WTC11 (cell line): ENCODE measurements at regions of chr17 and their contacts with region 1.

Region 1: GRCh38 chr17:5031365-5032082 is 3.7 kb downstream of the SLC52A1 start:
- DNase-seq: peak; percentile 85
- ATAC-seq: peak; percentile 62
- H3K4me3 Mint-ChIP-seq: peak overlapping the region; percentile 66
- H3K27ac Mint-ChIP-seq: no peak overlapping the region
- H3K4me1 Mint-ChIP-seq: no peaks in the 10 kb centered on the region
- H3K27me3 Mint-ChIP-seq: peaks cover 26% of the 10 kb centered on the region
- CTCF ChIP-seq: peak; percentile 84

Region 2: GRCh38 chr17:4986951-4987766 is 44.4 kb before region 1 on chr17 and contains the start of gene CAMTA2:
- CTCF ChIA-PET with region 1: interaction called, 16 read pairs
- POLR2A ChIA-PET with region 1: no interaction called
- DNase-seq: peak; percentile 88
- ATAC-seq: peak; percentile 77
- H3K4me3 Mint-ChIP-seq: peak within 1 kb of the TSS; percentile 77
- H3K27ac Mint-ChIP-seq: no peak within 1 kb of the TSS
- H3K4me1 Mint-ChIP-seq: peaks cover 25% of the 10 kb centered on the region
- H3K27me3 Mint-ChIP-seq: peaks cover 44% of the 10 kb centered on the region
- CTCF ChIP-seq: peak; percentile 37
- total RNA-seq, gene CAMTA2: 9.2 to 14.2 TPM (median 12.3 TPM) in 3 replicates

Region 3: GRCh38 chr17:5055543-5055942 is 24.0 kb after region 1 on chr17:
- CTCF ChIA-PET with region 1: interaction called, 23 read pairs
- POLR2A ChIA-PET with region 1: no interaction called
- DNase-seq: no peak
- ATAC-seq: peak; percentile 81
- H3K4me3 Mint-ChIP-seq: no peak overlapping the region
- H3K27ac Mint-ChIP-seq: no peak overlapping the region
- H3K4me1 Mint-ChIP-seq: no peaks in the 10 kb centered on the region
- H3K27me3 Mint-ChIP-seq: peaks cover 12% of the 10 kb centered on the region
- CTCF ChIP-seq: no peak

Region 4: GRCh38 chr17:5065227-5065744 is 33.8 kb after region 1 on chr17:
- CTCF ChIA-PET with region 1: interaction called, 23 read pairs
- POLR2A ChIA-PET with region 1: interaction called, 5 read pairs
- DNase-seq: no peak
- ATAC-seq: no peak
- H3K4me3 Mint-ChIP-seq: no peak overlapping the region
- H3K27ac Mint-ChIP-seq: no peak overlapping the region
- H3K4me1 Mint-ChIP-seq: no peaks in the 10 kb centered on the region
- H3K27me3 Mint-ChIP-seq: peaks cover 12% of the 10 kb centered on the region
- CTCF ChIP-seq: no peak